Activated T-helper 1 cell treated with anti-CD3 and anti-CD28 coated beads, Interleukin-12 subunit alpha, Interleukin-12 subunit beta, Interleukin-2, Interleukin-4 antibody, amounts not matched to agents 30 ng/mL and 10 ng/mL and 1 ng/mL, durations not matched to agents 14 hours and 24 hours and 36 hours (primary cell): ENCODE measurements at regions of chr12 and their contacts with region 1.

Region 1: DNA sequence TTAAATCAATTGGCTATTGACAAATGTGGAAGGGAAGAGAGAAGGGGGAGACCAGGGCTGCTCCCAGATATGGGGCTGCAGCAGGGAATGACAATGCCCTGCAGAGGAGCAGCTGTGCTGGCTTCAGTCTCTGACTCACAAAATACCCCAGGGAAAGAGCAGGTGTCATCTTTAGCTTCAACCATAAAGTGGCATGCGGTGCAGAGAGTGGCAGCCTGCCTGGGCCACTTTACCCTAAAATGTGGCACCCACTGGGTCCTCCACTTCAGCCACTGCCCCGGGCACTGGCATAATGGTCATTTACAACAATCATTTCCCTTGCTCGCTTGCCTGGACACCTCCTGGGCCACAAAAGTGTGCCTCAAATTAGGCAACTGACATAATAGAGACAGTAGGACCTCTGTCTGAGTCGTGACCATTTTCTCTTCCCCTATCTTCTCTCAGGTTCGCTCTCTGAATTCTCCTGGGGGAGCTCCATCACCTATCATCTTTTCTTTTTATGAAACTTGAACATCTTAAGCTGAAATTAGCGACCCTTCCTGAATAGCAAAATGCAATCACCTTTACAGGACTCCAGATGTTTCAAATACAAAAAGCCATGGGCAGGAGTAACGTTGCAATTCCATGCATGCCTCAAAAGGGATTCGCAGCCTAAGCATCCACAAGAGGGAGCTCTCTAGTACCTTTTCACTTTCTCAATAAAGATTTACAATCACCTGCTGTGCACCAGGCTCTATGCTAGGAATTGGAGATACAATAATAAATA is 179.9 kb upstream of the ATF7IP start:
- DNase-seq: peak; percentile 3
- H3K4me3 Mint-ChIP-seq: no peak overlapping the region
- H3K27ac Mint-ChIP-seq: no peak overlapping the region
- H3K4me1 Mint-ChIP-seq: no peaks in the 10 kb centered on the region
- H3K27me3 Mint-ChIP-seq: peaks cover 4% of the 10 kb centered on the region

Region 2: DNA sequence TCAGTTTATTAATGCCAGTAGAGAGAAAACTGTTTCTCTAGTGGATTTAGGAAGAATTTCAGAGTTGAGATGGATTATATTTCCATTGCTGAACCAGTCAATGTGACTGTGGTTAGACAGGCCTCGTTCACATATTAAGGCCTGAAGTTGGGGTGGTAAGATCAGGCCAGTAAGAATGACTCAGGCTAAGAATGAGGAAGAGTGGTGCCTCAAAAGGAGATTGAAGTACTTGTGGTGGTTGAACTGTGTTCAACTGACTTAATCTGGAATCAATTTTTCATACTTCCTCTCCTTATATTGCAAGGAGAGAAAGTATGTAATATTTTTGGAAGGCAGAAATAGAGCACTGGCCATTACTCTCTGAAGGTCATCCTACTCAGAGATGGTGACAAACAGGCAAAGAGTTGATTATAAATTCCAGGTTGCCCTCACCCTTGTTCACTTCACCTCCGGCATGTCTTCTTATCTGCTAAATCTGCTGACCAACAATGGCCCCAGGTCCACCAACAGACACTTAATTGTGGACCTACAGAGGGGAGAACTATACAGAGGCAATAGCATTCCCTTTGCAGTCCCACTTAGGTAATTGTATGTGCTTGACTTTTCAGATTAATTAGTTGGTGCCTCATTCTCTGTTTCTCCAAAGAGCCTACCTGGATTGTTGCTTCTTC is 142.2 kb after region 1 on chr12:
- intact Hi-C with region 1: loop called (anchors 10 kb)
- DNase-seq: no peak
- H3K4me3 Mint-ChIP-seq: no peak overlapping the region
- H3K27ac Mint-ChIP-seq: no peak overlapping the region
- H3K4me1 Mint-ChIP-seq: no peaks in the 10 kb centered on the region
- H3K27me3 Mint-ChIP-seq: no peaks in the 10 kb centered on the region

Region 3: DNA sequence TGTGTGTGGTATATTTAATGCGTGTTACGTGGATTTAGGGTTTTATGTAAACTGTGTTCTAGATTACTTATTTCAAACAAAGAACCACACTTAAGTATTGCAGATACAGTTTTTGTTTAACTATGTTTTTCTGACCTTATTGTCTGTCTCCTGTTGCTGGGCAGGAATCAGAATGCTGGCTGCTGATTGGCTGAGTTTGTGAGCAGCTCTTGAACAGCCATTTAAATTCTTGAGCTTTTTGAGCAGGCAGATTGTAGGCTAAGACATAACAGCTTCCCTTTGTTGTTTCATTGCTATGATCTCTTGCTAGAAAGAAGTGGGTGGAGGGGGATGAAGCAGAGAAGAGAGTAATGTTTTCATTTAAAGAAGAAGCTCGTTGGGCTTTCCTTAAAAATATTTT is 232.1 kb after region 1 on chr12:
- intact Hi-C with region 1: loop called (anchors 1 kb)
- DNase-seq: peak; percentile 60
- H3K4me3 Mint-ChIP-seq: peak overlapping the region; percentile 75
- H3K27ac Mint-ChIP-seq: peak overlapping the region; percentile 88
- H3K4me1 Mint-ChIP-seq: peaks cover 56% of the 10 kb centered on the region
- H3K27me3 Mint-ChIP-seq: no peaks in the 10 kb centered on the region

Region 4: DNA sequence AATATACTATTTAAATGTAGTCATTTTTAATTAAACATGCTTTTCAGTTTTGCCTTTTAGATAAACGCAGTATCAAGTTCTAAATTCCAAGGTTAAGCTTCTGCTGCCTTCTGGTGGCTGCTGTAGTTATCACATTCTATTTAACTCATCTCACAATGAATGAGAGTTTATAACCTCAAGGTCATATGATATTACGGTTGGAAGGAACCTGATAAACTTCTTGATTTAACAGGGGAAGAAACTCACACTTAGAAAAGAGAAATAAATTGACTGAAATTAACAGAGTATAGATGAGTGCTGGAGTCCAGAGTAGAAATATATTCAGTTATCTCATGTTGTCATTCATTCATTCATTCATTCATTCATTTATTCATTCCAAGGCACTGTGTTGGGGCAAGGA is 478.9 kb after region 1 on chr12:
- intact Hi-C with region 1: loop called (anchors 1 kb)
- DNase-seq: no peak
- H3K4me3 Mint-ChIP-seq: no peak overlapping the region
- H3K27ac Mint-ChIP-seq: no peak overlapping the region
- H3K4me1 Mint-ChIP-seq: peaks cover 5% of the 10 kb centered on the region
- H3K27me3 Mint-ChIP-seq: peaks cover 7% of the 10 kb centered on the region